Activated CD8-positive, alpha-beta T cell treated with anti-CD3 and anti-CD28 coated beads, Interleukin-2, amount 10 ng/mL, durations not matched to agents 7 days and 5 days (primary cell): ENCODE measurements at regions of chr15 and their contacts with region 1.

Region 1: GRCh38 chr15:33700695-33701304 is 267.5 kb upstream of the CHRM5 start:
- DNase-seq: peak; percentile 65
- ATAC-seq: peak; percentile 80
- H3K4me3 Mint-ChIP-seq: no peak overlapping the region
- H3K27ac Mint-ChIP-seq: no peak overlapping the region
- H3K4me1 Mint-ChIP-seq: no peaks in the 10 kb centered on the region
- H3K27me3 Mint-ChIP-seq: no peaks in the 10 kb centered on the region

Region 2: GRCh38 chr15:33086507-33087121 is 614.2 kb before region 1 on chr15:
- CTCF ChIA-PET with region 1: interaction called, 12 read pairs
- POLR2A ChIA-PET with region 1: no interaction called
- DNase-seq: no peak
- ATAC-seq: no peak
- H3K4me3 Mint-ChIP-seq: no peak overlapping the region
- H3K27ac Mint-ChIP-seq: no peak overlapping the region
- H3K4me1 Mint-ChIP-seq: no peaks in the 10 kb centered on the region
- H3K27me3 Mint-ChIP-seq: no peaks in the 10 kb centered on the region

Region 3: GRCh38 chr15:33292717-33293307 is 408.0 kb before region 1 on chr15:
- CTCF ChIA-PET with region 1: interaction called, 46 read pairs
- POLR2A ChIA-PET with region 1: no interaction called
- DNase-seq: peak; percentile 58
- ATAC-seq: no peak
- H3K4me3 Mint-ChIP-seq: no peak overlapping the region
- H3K27ac Mint-ChIP-seq: no peak overlapping the region
- H3K4me1 Mint-ChIP-seq: no peaks in the 10 kb centered on the region
- H3K27me3 Mint-ChIP-seq: peaks cover 3% of the 10 kb centered on the region

Region 4: GRCh38 chr15:33737687-33738601 is 37.1 kb after region 1 on chr15:
- CTCF ChIA-PET with region 1: interaction called, 10 read pairs
- POLR2A ChIA-PET with region 1: no interaction called
- DNase-seq: peak; percentile 44
- ATAC-seq: peak; percentile 53
- H3K4me3 Mint-ChIP-seq: no peak overlapping the region
- H3K27ac Mint-ChIP-seq: no peak overlapping the region
- H3K4me1 Mint-ChIP-seq: no peaks in the 10 kb centered on the region
- H3K27me3 Mint-ChIP-seq: peaks cover 4% of the 10 kb centered on the region